Activated CD4-positive, alpha-beta T cell treated with anti-CD3 and anti-CD28 coated beads, Interleukin-2, amount 10 ng/mL, durations not matched to agents 24 days and 14 days (primary cell): ENCODE measurements at regions of chr6 and their contacts with region 1.

Region 1: GRCh38 chr6:108874470-108875160 is 26.4 kb downstream of the ARMC2 start:
- DNase-seq: peak; percentile 87
- H3K4me3 Mint-ChIP-seq: peak overlapping the region; percentile 68
- H3K27ac Mint-ChIP-seq: peak overlapping the region; percentile 91
- H3K4me1 Mint-ChIP-seq: peaks cover 67% of the 10 kb centered on the region
- H3K27me3 Mint-ChIP-seq: peaks cover 20% of the 10 kb centered on the region

Region 2: GRCh38 chr6:107731422-107732319 is 1142.9 kb before region 1 on chr6:
- intact Hi-C with region 1: loop called (anchors 10 kb)
- DNase-seq: peak; percentile 69
- H3K4me3 Mint-ChIP-seq: peak overlapping the region; percentile 88
- H3K27ac Mint-ChIP-seq: peak overlapping the region; percentile 73
- H3K4me1 Mint-ChIP-seq: peaks cover 68% of the 10 kb centered on the region
- H3K27me3 Mint-ChIP-seq: peaks cover 4% of the 10 kb centered on the region

Region 3: GRCh38 chr6:108667993-108668392 is 206.6 kb before region 1 on chr6:
- intact Hi-C with region 1: loop called (anchors 1 kb)
- DNase-seq: no peak
- H3K4me3 Mint-ChIP-seq: no peak overlapping the region
- H3K27ac Mint-ChIP-seq: no peak overlapping the region
- H3K4me1 Mint-ChIP-seq: peaks cover 6% of the 10 kb centered on the region
- H3K27me3 Mint-ChIP-seq: no peaks in the 10 kb centered on the region

Region 4: GRCh38 chr6:108848116-108848868 is 26.3 kb before region 1 on chr6 and contains the start of gene ARMC2:
- intact Hi-C with region 1: loop called (anchors 1 kb)
- DNase-seq: peak; percentile 97
- H3K4me3 Mint-ChIP-seq: peak within 1 kb of the TSS; percentile 85
- H3K27ac Mint-ChIP-seq: peak within 1 kb of the TSS; percentile 74
- H3K4me1 Mint-ChIP-seq: peaks cover 19% of the 10 kb centered on the region
- H3K27me3 Mint-ChIP-seq: peaks cover 21% of the 10 kb centered on the region
- total RNA-seq, gene ARMC2: 2.7 and 3.3 TPM in 2 replicates

Region 5: DNA sequence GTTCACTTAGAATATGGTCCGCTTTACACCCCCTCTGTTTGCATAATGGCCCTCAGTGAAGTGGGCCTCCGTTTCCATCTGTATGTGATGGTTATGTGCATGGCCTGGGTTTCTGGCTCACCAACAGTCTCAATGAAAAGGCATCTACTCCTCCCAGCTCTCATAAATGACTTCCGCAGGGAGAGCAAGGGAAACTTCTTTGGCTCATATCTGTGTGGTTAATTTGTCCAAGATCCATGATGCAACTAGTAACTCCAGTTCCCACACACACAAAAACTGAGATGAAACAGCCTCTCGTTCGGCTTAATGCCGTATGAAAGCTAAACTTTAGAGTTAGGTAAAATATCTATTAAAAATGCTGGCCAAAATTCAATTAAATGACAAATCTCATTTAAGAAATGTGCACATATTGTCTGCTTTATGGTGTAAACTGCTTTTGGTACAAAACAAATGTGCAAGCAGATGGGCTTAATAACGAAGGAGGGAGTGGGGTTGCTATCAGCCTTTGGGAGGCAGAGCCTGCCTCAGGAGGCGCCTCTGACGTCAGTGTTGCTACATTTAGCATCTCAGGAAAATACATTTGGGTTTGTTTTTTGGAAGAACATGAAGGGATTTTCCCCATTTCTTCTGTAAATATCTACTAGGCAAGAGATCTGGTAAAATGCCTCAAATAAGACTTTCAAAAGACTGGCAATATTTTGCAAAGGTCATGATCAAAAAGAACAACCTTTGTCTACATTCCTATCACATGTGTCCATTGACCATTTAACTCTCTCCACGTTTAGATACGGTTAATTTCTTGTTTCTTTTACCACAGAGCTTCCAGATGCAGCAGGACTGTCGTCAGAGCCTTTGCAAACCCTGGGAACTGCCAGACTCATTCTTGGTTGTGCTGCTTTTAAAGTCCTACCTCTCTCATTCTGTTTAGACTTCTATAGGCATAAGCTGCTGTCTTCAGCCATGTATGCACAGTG is 70.4 kb after region 1 on chr6:
- intact Hi-C with region 1: loop called (anchors 2 kb)
- DNase-seq: no peak
- H3K4me3 Mint-ChIP-seq: peak overlapping the region; percentile 27
- H3K27ac Mint-ChIP-seq: peak overlapping the region; percentile 34
- H3K4me1 Mint-ChIP-seq: peaks cover 57% of the 10 kb centered on the region
- H3K27me3 Mint-ChIP-seq: no peaks in the 10 kb centered on the region